ENCODE measurements at regions of chr7 and their contacts with region 1.

Region 1: GRCh38 chr7:53070883-53071282 is 35.5 kb downstream of the POM121L12 start:
- DNase-seq: no peak
- H3K4me3 ChIP-seq: no peak overlapping the region
- CTCF ChIP-seq: no peak
- POLR2A ChIP-seq: no peak

Region 2: GRCh38 chr7:53302496-53303246 is 231.8 kb after region 1 on chr7:
- intact Hi-C with region 1: loop called (anchors 10 kb)
- DNase-seq: no peak
- H3K4me3 ChIP-seq: no peak overlapping the region
- CTCF ChIP-seq: no peak
- POLR2A ChIP-seq: no peak

Measured in lower leg skin (tissue), 4 donors.